ENCODE measurements at regions of chr5 and their contacts with region 1.

Region 1: DNA sequence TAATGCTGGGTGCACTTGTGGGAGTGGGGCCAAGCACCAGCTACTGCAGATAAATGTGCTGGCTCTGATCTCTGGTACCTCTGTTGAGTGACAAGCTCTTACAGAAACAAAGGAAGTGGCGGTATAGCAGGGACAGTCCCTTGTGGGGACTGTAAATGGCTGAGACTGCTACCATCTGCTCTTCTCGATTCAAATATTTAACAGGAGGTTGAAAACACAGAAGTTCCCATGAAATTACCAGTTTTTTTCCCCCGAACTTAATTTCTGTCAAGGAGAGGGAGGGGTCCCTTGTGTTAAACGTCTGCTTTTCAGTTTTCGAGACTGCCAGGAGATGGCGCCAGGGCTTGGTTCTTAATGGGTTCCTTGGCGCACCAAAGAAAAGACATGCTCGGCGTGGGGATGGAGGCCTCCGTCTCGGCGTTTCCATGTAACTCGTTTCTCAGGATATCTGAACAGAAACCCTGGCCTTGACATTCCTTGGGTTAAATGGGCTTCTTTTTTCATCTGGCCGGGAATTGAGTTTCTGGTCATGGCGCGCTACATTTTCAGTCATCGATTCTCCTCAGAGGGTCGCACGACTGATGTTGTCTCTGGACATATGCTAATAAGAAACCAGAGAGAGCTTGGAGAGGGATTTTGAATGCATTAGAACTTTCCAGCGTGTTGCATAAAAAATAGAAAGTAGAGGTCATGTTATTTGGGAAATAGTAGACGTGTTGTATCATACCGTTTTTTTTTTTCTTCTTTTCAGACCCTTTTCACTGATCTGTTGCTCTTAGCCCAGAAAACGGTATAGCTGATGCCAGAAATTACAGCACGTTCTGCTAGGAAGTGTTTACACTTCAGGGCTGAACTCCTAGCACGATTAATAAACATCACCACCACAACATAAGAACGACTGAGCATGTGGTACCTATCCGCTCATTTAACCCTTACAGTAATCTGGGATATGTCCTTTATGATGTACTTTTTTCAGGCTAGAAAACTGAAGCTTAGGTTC is 64.0 kb downstream of the CARTPT start:
- DNase-seq: peak; percentile 59
- ATAC-seq: peak; percentile 89
- H3K4me3 ChIP-seq: no peak overlapping the region
- H3K27ac ChIP-seq: no peak overlapping the region
- H3K4me1 ChIP-seq: peaks cover 0 to 9% of the 10 kb centered on the region in 2 experiments; a peak in 2 of 4 replicates
- H3K27me3 ChIP-seq: no peaks in the 10 kb centered on the region
- CTCF ChIP-seq: peak; percentile 79 to 91 (median 87); a peak in 5 of 6 replicates
- POLR2A ChIP-seq: no peak
- RAD21 ChIP-seq: peak; percentile 93

Region 2: DNA sequence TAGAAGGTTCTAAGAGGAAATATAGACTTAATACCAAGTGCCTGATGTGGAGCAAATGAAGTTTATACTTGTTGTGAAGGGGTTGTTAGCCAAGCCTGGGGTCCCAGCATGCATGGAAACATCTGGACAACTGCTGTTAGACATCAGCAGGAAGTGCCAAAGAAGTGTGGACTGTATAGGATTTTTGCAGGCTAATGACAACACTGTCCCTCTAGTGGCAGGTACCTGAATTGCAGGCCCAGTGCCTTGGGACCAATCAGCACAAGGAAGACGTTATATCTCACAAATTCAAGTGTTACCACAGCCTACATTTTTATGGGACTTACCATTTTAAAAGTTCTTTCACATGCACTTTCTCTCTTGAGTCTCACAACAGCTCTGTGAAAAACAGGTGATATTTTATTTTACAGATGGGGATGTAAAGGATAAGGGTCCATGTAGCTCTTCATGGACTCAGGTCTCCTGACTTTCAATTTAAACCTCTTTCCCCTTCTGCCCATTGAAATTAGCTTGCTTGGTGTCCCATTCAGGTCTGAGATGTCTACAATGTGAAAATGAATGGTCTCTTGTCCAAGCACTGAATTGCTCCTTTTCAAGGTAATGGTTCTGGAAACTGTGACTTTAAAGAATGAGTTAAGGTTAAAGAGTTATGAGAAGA is 235.2 kb after region 1 on chr5:
- CTCF ChIA-PET with region 1: interaction called, 7 read pairs
- POLR2A ChIA-PET with region 1: no interaction called
- RAD21 ChIA-PET with region 1: no interaction called
- intact Hi-C with region 1: loop called (anchors 1 kb)
- DNase-seq: peak; percentile 57
- ATAC-seq: peak; percentile 72
- H3K4me3 ChIP-seq: no peak overlapping the region
- H3K27ac ChIP-seq: no peak overlapping the region
- H3K4me1 ChIP-seq: peaks cover 10 to 16% of the 10 kb centered on the region in 2 experiments
- H3K27me3 ChIP-seq: no peaks in the 10 kb centered on the region
- CTCF ChIP-seq: peak; percentile 49 to 100 (median 98); a peak in 5 of 6 replicates
- POLR2A ChIP-seq: no peak
- RAD21 ChIP-seq: peak; percentile 65

Region 3: GRCh38 chr5:72244862-72245371 is 461.8 kb after region 1 on chr5:
- CTCF ChIA-PET with region 1: interaction called, 8 read pairs
- POLR2A ChIA-PET with region 1: no interaction called
- RAD21 ChIA-PET with region 1: interaction called in 1 of 2 experiments, 3 read pairs
- intact Hi-C with region 1: loop called (anchors 5 kb)
- DNase-seq: peak; percentile 24
- ATAC-seq: peak; percentile 84
- H3K4me3 ChIP-seq: no peak overlapping the region
- H3K27ac ChIP-seq: no peak overlapping the region
- H3K4me1 ChIP-seq: peaks cover 26 to 41% of the 10 kb centered on the region in 2 experiments
- H3K27me3 ChIP-seq: no peaks in the 10 kb centered on the region
- CTCF ChIP-seq: peak; percentile 30 to 51 (median 45); a peak in 5 of 6 replicates
- POLR2A ChIP-seq: no peak
- RAD21 ChIP-seq: peak; percentile 54

Region 4: GRCh38 chr5:72280581-72281170 is 497.6 kb after region 1 on chr5:
- CTCF ChIA-PET with region 1: interaction called, 5 read pairs
- POLR2A ChIA-PET with region 1: no interaction called
- RAD21 ChIA-PET with region 1: no interaction called
- intact Hi-C with region 1: loop called (anchors 1 kb)
- DNase-seq: peak; percentile 39
- ATAC-seq: peak; percentile 80
- H3K4me3 ChIP-seq: no peak overlapping the region
- H3K27ac ChIP-seq: no peak overlapping the region
- H3K4me1 ChIP-seq: peaks cover 0 to 5% of the 10 kb centered on the region in 2 experiments; a peak in 1 of 4 replicates
- H3K27me3 ChIP-seq: no peaks in the 10 kb centered on the region
- CTCF ChIP-seq: peak; percentile 32 to 64 (median 53); a peak in 5 of 6 replicates
- POLR2A ChIP-seq: no peak
- RAD21 ChIP-seq: peak; percentile 48

Region 5: GRCh38 chr5:72319976-72320752 is 537.1 kb after region 1 on chr5 and contains the starts of genes MRPS27 and PTCD2:
- CTCF ChIA-PET with region 1: no interaction called
- POLR2A ChIA-PET with region 1: no interaction called
- RAD21 ChIA-PET with region 1: no interaction called
- intact Hi-C with region 1: loop called (anchors 5 kb)
- DNase-seq: peak; percentile 98
- ATAC-seq: peak; percentile 96
- H3K4me3 ChIP-seq: peak within 1 kb of the TSS; percentile 86 to 90
- H3K27ac ChIP-seq: peak within 1 kb of the TSS; percentile 67
- H3K4me1 ChIP-seq: peaks cover 20 to 34% of the 10 kb centered on the region in 2 experiments
- H3K27me3 ChIP-seq: no peaks in the 10 kb centered on the region
- CTCF ChIP-seq: 0 out of 6 replicates have a peak, but pooled peaks of 2 of the 3 experiments have one; percentile 13 to 16
- POLR2A ChIP-seq: peak; percentile 94
- RAD21 ChIP-seq: no peak
- total RNA-seq, gene MRPS27: 113 TPM
- total RNA-seq, gene PTCD2: 19.3 TPM

Region 6: GRCh38 chr5:73534011-73534644 is 1751.1 kb after region 1 on chr5:
- CTCF ChIA-PET with region 1: no interaction called
- POLR2A ChIA-PET with region 1: no interaction called
- RAD21 ChIA-PET with region 1: no interaction called
- intact Hi-C with region 1: loop called (anchors 10 kb)
- DNase-seq: no peak
- ATAC-seq: no peak
- H3K4me3 ChIP-seq: no peak overlapping the region
- H3K27ac ChIP-seq: no peak overlapping the region
- H3K4me1 ChIP-seq: 0 out of 4 replicates have a peak, but pooled peaks cover 0 to 3% of the 10 kb centered on the region in 2 experiments
- H3K27me3 ChIP-seq: no peaks in the 10 kb centered on the region
- CTCF ChIP-seq: no peak
- POLR2A ChIP-seq: no peak
- RAD21 ChIP-seq: no peak

Measured in HCT116 (cell line).